ENCODE measurements at regions of chr15 and their contacts with region 1.

Region 1: GRCh38 chr15:92917606-92918407 is 17.7 kb downstream of the CHD2 start:
- DNase-seq: peak; percentile 98
- H3K4me3 Mint-ChIP-seq: peak overlapping the region; percentile 41
- H3K27ac Mint-ChIP-seq: peak overlapping the region; percentile 98
- H3K4me1 Mint-ChIP-seq: peaks cover 85% of the 10 kb centered on the region
- H3K27me3 Mint-ChIP-seq: no peaks in the 10 kb centered on the region

Region 2: DNA sequence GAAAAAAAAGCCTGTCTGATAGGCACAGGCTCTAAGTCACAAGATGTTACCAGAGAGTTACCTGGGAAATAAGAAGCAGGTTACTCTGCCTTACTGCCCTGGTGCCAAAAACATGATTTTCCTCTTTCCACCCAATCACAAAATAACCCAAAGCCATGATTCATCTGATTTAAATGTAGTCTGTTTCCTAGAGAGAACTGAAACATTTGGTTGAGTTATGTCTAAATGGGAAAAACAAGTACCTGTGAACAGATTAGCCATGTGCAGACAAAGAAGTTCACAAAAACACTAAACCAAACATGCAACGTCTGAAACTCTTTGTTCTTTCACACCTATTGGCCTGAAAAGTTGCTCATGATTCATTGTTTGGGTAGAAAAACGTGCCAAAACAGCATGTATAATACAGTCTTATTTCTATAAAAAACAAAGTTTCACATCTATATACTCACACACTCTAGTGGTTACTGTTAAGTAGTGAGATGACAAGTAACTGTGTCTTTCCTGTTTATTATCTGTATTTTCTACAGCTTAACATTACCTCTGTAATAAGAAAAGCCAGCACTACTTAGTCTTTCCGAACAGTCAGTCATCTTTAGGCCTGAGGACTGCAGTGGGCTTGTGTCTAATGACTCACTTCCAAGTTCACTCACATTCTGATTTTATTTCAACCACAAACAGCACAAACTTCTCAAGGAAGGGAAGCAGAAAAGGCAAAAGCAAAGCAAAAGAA is 292.4 kb before region 1 on chr15:
- CTCF ChIA-PET with region 1: no interaction called
- intact Hi-C with region 1: loop called (anchors 5 kb)
- DNase-seq: peak; percentile 48
- H3K4me3 Mint-ChIP-seq: no peak overlapping the region
- H3K27ac Mint-ChIP-seq: peak overlapping the region; percentile 82
- H3K4me1 Mint-ChIP-seq: peaks cover 24% of the 10 kb centered on the region
- H3K27me3 Mint-ChIP-seq: no peaks in the 10 kb centered on the region

Region 3: DNA sequence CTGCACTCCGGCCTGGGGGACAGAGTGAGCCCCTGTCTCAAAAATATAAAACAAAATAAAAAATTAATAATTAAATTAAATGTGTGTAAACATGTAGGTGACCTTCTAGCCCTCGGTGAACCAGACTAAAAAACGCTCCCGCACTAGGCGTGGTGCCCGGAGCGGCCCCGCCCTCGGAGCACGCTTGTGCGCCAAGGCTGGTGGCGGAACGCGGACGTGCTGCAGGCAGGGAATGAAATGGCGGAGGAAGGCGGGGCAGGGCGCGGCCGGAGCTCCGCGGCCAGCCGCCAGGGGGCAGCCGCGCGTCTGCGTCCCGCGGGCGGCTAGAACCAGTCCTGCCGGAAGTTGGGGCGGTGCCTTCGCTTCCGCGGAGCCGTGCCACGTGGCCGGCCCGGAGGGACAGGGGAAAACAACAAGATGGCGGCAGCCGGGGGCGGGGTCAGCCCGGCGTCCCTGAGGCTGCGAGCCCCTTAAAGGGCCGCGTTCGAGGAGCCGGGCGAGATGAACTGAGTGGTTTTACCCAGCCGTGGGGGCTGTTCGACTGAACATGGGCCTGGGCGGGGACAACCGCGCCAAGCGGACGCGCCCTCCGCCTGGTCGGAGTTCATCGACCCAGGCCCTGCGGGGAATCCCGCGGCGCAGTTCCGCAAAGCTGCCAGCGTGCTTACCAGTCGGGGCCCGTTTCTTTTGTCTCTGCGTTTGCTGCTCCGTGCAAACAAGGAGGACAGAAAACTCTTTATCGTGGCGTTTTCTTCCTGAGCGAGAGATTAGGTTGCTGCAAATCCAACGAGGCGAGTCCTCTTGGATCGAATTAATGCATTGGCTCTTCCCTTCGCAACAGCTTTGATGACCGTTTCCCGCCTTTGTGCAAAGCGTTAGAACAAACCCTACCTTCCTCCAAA is 108.6 kb before region 1 on chr15:
- CTCF ChIA-PET with region 1: interaction called, 25 read pairs
- intact Hi-C with region 1: loop called (anchors 1 kb)
- DNase-seq: peak; percentile 99
- H3K4me3 Mint-ChIP-seq: peak overlapping the region; percentile 87
- H3K27ac Mint-ChIP-seq: peak overlapping the region; percentile 99
- H3K4me1 Mint-ChIP-seq: peaks cover 46% of the 10 kb centered on the region
- H3K27me3 Mint-ChIP-seq: no peaks in the 10 kb centered on the region

Region 4: GRCh38 chr15:92845126-92845508 is 72.7 kb before region 1 on chr15:
- CTCF ChIA-PET with region 1: no interaction called
- intact Hi-C with region 1: loop called (anchors 1 kb)
- DNase-seq: no peak
- H3K4me3 Mint-ChIP-seq: peak overlapping the region; percentile 71
- H3K27ac Mint-ChIP-seq: peak overlapping the region; percentile 96
- H3K4me1 Mint-ChIP-seq: peaks cover 85% of the 10 kb centered on the region
- H3K27me3 Mint-ChIP-seq: no peaks in the 10 kb centered on the region

Region 5: DNA sequence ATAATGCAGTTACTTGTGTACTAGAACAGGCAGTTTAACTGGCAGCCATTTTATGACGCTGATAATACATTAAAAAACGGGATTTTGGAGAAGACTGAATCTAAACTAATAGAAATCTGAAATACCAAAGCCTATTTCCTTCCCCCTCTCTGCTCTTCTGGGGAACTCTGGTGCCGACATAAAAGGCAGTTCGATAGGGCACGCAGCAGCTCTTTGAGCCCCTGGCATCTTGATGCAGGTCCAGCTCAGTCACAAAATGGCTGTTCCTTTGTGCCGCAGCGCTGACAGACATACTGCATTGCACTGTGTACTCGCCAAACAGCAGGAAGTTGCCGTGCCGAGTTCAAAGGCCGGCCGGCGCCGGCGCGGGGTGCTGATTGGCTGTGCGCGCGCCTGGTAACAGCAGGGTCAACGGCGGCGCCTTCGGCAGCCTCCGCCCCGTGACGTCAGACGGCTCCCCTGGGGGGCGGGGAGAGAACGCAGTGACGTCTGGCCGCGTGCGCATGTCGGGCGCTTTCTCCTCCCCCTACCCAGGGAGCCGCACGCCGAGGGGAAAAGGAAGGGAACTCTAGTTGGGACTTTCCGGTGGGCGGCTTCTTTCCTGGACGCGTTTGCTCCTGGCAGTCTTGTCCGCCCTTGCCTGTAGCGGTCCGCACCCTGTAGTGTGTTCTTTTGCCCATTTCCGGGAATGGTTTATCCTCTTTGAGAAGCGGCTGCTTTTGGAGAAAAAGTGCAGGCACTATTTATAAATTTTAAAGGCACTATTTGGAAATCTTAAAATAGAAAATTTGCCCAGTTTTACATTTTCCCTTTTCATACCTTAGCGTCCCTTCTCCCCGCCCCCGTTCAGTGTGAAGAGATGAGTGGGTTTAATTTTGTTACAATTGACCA is 13.6 kb before region 1 on chr15:
- CTCF ChIA-PET with region 1: interaction called, 24 read pairs
- intact Hi-C with region 1: loop called (anchors 1 kb)
- DNase-seq: peak; percentile 99
- H3K4me3 Mint-ChIP-seq: peak overlapping the region; percentile 92
- H3K27ac Mint-ChIP-seq: peak overlapping the region; percentile 100
- H3K4me1 Mint-ChIP-seq: peaks cover 50% of the 10 kb centered on the region
- H3K27me3 Mint-ChIP-seq: peaks cover 4% of the 10 kb centered on the region

Region 6: DNA sequence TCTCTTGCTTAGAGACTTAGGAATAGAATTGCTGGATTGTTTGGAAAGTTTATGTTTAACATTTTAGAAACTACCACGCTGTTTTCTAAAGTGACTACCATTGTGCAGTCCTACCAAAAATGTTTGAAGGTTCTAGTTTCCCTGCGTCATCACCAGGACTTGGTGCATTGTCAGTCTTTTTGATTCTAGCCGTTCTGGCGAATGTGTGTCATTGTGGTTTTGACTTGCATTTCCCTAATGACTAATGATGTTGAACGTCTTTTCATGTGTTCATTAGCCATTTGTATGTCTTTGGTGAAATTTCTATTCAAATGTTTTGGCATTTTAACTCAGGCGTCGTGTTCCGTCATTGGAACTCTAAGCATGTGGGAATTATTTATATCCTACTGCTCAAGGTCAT is 40.3 kb after region 1 on chr15:
- CTCF ChIA-PET with region 1: interaction called, 7 read pairs
- intact Hi-C with region 1: loop called (anchors 2 kb)
- DNase-seq: peak; percentile 80
- H3K4me3 Mint-ChIP-seq: peak overlapping the region; percentile 20
- H3K27ac Mint-ChIP-seq: peak overlapping the region; percentile 85
- H3K4me1 Mint-ChIP-seq: peaks cover 56% of the 10 kb centered on the region
- H3K27me3 Mint-ChIP-seq: no peaks in the 10 kb centered on the region

Region 7: GRCh38 chr15:93018580-93018979 is 100.8 kb after region 1 on chr15:
- CTCF ChIA-PET with region 1: no interaction called
- intact Hi-C with region 1: loop called (anchors 2 kb)
- DNase-seq: no peak
- H3K4me3 Mint-ChIP-seq: no peak overlapping the region
- H3K27ac Mint-ChIP-seq: peak overlapping the region; percentile 65
- H3K4me1 Mint-ChIP-seq: peaks cover 69% of the 10 kb centered on the region
- H3K27me3 Mint-ChIP-seq: no peaks in the 10 kb centered on the region

Measured in activated naive CD4-positive, alpha-beta T cell treated with anti-CD3 and anti-CD28 coated beads for 36 hours (primary cell).